ENCODE measurements at regions of chr12 and their contacts with region 1.

Region 1: GRCh38 chr12:120228291-120229070 is 27.6 kb upstream of the RPLP0 start:
- DNase-seq: peak; percentile 97

Region 2: DNA sequence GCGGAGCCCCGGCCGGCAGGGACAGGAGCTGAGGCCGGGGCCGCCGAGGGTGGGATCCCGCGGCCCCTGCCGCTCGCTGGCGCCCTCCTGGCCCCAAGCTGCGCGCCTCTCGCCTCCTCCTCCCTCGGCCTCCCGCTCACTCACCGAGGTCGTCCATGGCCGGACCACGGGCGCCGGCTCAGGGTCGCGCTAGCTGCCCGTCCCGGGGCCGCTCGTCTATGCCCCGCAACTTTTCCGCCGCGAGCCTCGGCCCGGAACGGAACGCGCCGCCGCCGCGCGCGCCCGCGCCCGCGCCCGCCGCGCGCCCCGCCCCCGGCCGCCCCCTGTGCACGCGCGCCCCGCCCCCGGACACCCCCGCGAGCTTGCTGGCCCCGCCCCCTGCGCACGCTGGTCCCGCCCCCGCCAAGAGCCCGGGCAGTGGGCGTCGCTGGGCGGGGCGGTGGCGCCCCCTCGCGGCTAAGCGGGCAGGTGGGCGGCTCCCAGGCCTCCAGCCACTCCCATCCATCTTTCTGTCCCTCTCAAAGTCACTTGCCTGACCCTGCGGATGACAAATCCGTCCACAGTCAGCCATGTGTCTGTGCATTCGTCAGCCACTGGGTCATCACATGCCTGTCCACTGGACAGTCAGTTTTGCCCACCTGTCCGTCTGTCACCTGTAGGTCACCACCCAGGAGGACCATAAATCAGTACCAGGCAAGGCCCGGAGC is 37.1 kb after region 1 on chr12 and contains the start of gene PXN:
- intact Hi-C with region 1: loop called (anchors 2 to 5 kb)
- DNase-seq: peak; percentile 97
- total RNA-seq, gene PXN: 110 to 113 TPM

Region 3: GRCh38 chr12:120286796-120287465 is 58.5 kb after region 1 on chr12:
- intact Hi-C with region 1: loop called in 1 of 2 experiments (anchors 2 kb)
- DNase-seq: no peak

Region 4: DNA sequence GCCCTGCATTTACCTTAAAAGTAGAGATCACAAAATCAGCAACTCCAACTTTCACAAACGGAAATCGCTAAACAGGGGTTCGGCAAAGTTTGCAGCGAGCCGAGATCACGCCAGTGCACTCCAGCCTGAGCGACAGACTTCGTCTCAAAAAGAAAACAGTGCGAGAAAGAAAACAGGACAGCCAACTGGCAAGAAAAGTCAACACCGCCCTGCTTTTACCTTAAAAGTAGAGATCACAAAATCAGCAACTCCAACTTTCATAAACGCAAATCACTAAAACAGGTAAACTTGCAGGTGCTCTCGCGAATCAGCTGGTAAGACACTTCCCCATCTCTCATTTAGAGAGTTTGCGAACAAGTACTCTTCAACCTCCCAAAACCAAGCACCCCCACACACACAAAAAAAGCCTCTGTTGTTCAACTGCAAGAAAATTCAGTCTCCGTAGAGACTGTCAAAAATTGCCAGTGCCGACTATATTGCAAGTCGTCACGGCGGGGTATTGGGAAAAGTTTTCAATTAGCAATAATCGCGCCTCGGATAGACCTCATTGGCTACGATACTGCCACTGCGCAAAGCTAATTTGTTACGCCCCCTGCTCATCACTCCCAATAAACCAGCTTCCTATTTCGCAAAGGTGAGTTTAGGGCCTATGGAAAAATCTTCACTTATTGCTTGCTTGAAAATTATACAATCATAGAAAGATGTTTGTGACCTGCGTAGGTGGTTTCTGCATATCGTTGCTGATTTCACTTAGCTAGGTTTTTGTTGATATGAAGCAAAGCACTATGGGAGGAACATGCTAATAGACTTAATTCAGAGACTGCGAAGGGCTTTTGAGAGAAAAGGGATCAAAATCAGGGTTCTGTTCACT is 64.4 kb after region 1 on chr12 and contains the start of gene RNU4-1:
- intact Hi-C with region 1: loop called in 1 of 2 experiments (anchors 2 kb)
- DNase-seq: no peak
- total RNA-seq, gene RNU4-1: 4,532 to 5,081 TPM